Naive thymus-derived CD4-positive, alpha-beta T cell (primary cell): ENCODE measurements at regions of chr17 and their contacts with region 1.

Region 1: DNA sequence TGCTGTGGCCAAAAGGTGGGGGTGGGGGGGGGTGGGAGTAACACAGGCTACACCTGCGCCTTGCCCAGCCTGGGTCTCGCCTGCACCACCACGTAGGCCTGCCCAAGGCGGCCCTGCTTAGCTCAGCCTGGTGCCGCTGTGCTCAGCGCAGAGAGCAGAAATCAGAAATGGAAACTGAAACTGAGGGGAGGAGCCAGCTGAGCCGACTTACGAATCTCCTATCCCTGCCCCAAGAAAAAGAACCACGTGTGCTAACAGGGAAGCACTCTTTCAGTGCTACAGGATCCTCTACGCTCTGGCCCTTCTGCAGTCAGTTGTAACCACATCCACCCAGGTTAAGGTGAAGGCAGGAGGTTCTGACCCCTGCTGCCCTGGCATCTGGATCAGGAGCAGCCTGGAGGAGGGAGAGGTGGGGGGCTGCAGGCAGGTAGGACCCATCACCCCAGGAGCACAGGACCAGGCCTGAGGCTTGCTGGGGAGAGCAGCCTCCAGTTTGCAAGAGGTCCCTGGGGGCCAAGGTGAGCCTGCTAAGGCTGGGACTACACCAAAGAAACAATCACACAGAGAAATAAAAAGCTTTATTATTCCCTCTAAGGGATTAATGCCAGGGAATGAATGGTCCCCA is at the start of gene DHX58:
- DNase-seq: peak; percentile 47 to 86 (median 81)
- ATAC-seq: peak; percentile 85
- H3K4me3 ChIP-seq: peak within 1 kb of the TSS; percentile 83
- H3K4me3 Mint-ChIP-seq: peak within 1 kb of the TSS; percentile 86 to 96 (median 94)
- H3K27ac ChIP-seq: peak within 1 kb of the TSS; percentile 83
- H3K27ac Mint-ChIP-seq: peak within 1 kb of the TSS; percentile 94 to 100 (median 97)
- H3K4me1 ChIP-seq: peaks cover 12 to 34% of the 10 kb centered on the region in 2 donors
- H3K4me1 Mint-ChIP-seq: peaks cover 22 to 60% (median 48%) of the 10 kb centered on the region in 7 donors
- H3K27me3 ChIP-seq: no peaks in the 10 kb centered on the region
- H3K27me3 Mint-ChIP-seq: no peaks in the 10 kb centered on the region
- total RNA-seq, gene DHX58: 36.0 to 80.5 (median 53.5) TPM

Region 2: DNA sequence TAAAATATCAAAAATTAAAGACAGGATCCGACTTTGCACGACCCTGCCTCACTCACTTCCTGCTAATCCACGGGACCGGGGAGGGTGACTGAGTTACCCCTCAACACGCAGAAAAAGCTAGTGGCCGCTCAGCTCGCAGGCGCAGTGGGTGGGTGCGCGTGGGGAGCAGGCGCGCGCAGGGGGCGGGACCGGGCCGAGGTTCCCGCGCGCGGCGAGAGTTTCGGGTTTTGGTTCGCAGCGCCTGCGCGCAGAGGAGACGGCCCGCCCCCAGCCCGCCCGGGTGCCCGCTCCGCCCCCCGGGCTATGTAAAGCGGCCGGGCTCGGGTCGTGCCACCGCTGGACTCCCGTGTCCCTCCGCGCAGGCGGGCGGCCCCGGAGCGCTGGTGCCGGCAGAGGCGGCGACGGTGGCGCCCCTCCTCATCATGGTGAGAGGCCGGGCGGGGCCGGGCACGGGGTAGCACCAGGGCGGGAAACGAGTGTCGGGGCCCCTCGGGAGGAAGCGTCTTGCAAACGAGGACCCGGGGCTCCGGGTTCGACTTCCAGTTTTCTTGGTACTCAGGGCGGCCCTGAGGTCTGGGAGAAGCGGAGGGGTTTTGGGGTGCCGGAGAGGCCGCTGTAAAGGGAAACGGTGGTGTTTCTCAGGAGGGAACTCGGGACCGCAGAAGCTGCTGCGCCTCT is 146.1 kb before region 1 on chr17 and contains the start of gene CNP:
- CTCF ChIA-PET with region 1: interaction called, 3 read pairs
- POLR2A ChIA-PET with region 1: interaction called, 33 read pairs
- intact Hi-C with region 1: loop called (anchors 1 kb)
- DNase-seq: peak; percentile 84 to 94 (median 88)
- ATAC-seq: peak; percentile 94
- H3K4me3 ChIP-seq: peak within 1 kb of the TSS; percentile 87
- H3K4me3 Mint-ChIP-seq: peak within 1 kb of the TSS; percentile 78 to 93 (median 88)
- H3K27ac ChIP-seq: peak within 1 kb of the TSS; percentile 88
- H3K27ac Mint-ChIP-seq: peak within 1 kb of the TSS; percentile 83 to 96 (median 89)
- H3K4me1 ChIP-seq: peaks cover 10 to 16% of the 10 kb centered on the region in 2 donors
- H3K4me1 Mint-ChIP-seq: peaks cover 24 to 51% (median 36%) of the 10 kb centered on the region in 7 donors
- H3K27me3 ChIP-seq: no peaks in the 10 kb centered on the region
- H3K27me3 Mint-ChIP-seq: peaks cover 0 to 2% (median 0%) of the 10 kb centered on the region in 5 donors
- total RNA-seq, gene CNP: 29.6 to 86.3 (median 32.5) TPM

Region 3: DNA sequence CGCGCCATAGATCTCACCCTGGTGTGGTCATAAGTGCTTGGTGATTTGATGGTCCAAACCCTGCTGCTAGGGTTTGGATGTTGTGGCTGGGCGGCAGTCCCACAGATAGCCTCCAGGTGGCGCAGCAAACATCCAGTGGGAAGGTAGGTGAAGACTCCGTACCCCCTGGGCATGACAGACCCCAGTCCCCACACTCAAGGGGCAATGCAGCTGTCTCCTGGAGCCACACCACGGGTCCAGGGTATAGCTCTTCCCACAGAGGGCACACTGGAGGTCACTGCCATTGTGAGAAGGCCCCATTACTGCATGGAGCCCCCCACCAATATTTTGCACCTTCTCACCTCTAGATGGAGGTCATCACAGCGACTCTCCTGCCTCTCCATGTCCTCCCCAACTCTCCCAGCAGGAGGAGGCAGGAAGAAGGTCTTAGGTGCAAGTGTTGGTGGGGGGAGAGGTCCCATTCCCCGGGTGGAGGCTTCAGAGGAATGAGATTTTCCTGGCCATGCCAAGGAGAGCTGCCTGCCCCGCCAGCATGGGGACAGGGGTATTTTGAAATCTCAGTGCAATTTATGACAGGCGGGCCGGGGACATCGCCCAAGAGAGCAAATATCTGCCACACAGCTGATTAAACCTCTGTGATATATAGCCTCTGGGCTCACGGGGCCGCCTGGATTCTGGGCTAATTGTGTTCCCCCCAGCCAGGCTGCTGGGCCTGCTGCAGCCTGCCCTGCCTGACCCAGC is 45.1 kb before region 1 on chr17:
- CTCF ChIA-PET with region 1: interaction called, 19 read pairs
- POLR2A ChIA-PET with region 1: interaction called, 10 read pairs
- intact Hi-C with region 1: loop called (anchors 1 kb)
- DNase-seq: peak; percentile 31 to 72 (median 58)
- ATAC-seq: peak; percentile 63
- H3K4me3 ChIP-seq: no peak overlapping the region
- H3K4me3 Mint-ChIP-seq: no peak overlapping the region
- H3K27ac ChIP-seq: no peak overlapping the region
- H3K27ac Mint-ChIP-seq: peak overlapping the region in 1 of 9 donors; percentile 36
- H3K4me1 ChIP-seq: peaks cover 7 to 30% of the 10 kb centered on the region in 2 donors
- H3K4me1 Mint-ChIP-seq: peaks cover 9 to 30% (median 23%) of the 10 kb centered on the region in 7 donors
- H3K27me3 ChIP-seq: peaks cover 0 to 2% of the 10 kb centered on the region in 2 donors
- H3K27me3 Mint-ChIP-seq: peaks cover 4 to 21% (median 11%) of the 10 kb centered on the region in 5 donors

Region 4: GRCh38 chr17:42092939-42093338 is 19.7 kb before region 1 on chr17:
- CTCF ChIA-PET with region 1: interaction called, 8 read pairs
- POLR2A ChIA-PET with region 1: interaction called, 11 read pairs
- intact Hi-C with region 1: loop called in 1 of 2 experiments (anchors 2 kb)
- DNase-seq: no peak
- ATAC-seq: no peak
- H3K4me3 ChIP-seq: no peak overlapping the region
- H3K4me3 Mint-ChIP-seq: no peak overlapping the region
- H3K27ac ChIP-seq: no peak overlapping the region
- H3K27ac Mint-ChIP-seq: no peak overlapping the region
- H3K4me1 ChIP-seq: peaks cover 4 to 6% of the 10 kb centered on the region in 2 donors
- H3K4me1 Mint-ChIP-seq: peaks cover 0 to 8% (median 5%) of the 10 kb centered on the region in 7 donors
- H3K27me3 ChIP-seq: no peaks in the 10 kb centered on the region
- H3K27me3 Mint-ChIP-seq: peaks cover 0 to 49% (median 24%) of the 10 kb centered on the region in 5 donors

Region 5: DNA sequence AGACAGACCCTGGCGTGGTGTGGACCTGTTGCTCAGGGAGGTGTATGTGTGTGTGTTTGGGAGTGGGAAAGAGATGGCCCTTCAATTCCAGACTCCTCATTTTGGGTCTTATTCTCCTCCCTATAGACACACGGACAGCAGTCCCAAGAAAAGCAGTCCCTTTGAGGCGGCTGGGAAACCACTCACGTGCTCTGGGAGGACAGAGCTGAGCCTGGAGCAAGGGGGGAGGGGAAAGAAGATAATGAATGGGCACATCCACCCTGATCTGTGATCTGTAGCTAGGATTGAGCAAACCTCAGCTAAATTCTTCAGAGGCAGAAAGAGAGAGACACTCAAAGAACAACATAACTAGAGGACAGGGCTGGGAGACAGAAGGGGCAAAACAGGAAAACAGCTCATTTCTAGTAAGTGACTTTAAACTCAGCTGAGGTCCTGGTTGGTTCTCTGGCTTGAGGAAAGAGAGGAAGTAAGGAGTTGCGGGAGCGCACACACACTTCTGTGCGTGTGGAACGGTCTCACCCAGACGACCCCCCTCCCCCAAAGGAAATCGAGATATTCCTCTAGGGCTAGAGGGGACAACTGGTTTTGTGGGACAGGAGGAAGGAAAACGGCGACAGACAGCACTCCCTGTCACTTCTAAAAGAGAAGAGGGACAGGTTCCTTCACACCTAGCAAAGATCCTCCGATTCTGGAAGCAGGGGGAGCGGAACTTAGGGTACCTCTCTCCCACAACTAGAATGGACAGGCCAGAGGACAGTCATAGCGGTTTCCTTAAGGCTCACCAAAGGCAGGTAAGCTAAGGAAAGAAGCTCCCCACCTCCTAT is 41.5 kb after region 1 on chr17:
- CTCF ChIA-PET with region 1: interaction called, 3 read pairs
- POLR2A ChIA-PET with region 1: no interaction called
- intact Hi-C with region 1: loop called (anchors 1 to 2 kb)
- DNase-seq: no peak
- ATAC-seq: no peak
- H3K4me3 ChIP-seq: peak overlapping the region; percentile 76
- H3K4me3 Mint-ChIP-seq: peak overlapping the region; percentile 81 to 97 (median 94)
- H3K27ac ChIP-seq: peak overlapping the region; percentile 94
- H3K27ac Mint-ChIP-seq: peak overlapping the region; percentile 79 to 96 (median 93)
- H3K4me1 ChIP-seq: peaks cover 10 to 16% of the 10 kb centered on the region in 2 donors
- H3K4me1 Mint-ChIP-seq: peaks cover 21 to 43% (median 37%) of the 10 kb centered on the region in 7 donors
- H3K27me3 ChIP-seq: no peaks in the 10 kb centered on the region
- H3K27me3 Mint-ChIP-seq: no peaks in the 10 kb centered on the region